Panc1 (cell line): ENCODE measurements at regions of chr5 and their contacts with region 1.

Region 1: GRCh38 chr5:172770675-172771438 is at the start of gene DUSP1:
- DNase-seq: peak; percentile 76
- ATAC-seq: peak; percentile 72
- H3K4me3 ChIP-seq: peak within 1 kb of the TSS; percentile 78 to 97
- H3K27ac ChIP-seq: peak within 1 kb of the TSS; percentile 99
- H3K4me1 ChIP-seq: peaks cover 69% of the 10 kb centered on the region
- H3K27me3 ChIP-seq: no peaks in the 10 kb centered on the region
- CTCF ChIP-seq: peak; percentile 80
- total RNA-seq, gene DUSP1: 79.9 TPM

Region 2: GRCh38 chr5:171524466-171524865 is 1246.4 kb before region 1 on chr5:
- CTCF ChIA-PET with region 1: no interaction called
- POLR2A ChIA-PET with region 1: no interaction called
- in situ Hi-C with region 1: no loop called
- intact Hi-C with region 1: no loop called
- DNase-seq: no peak
- ATAC-seq: no peak
- H3K4me3 ChIP-seq: no peak overlapping the region
- H3K27ac ChIP-seq: no peak overlapping the region
- H3K4me1 ChIP-seq: no peaks in the 10 kb centered on the region; the same call in 1 of the 2 replicates
- H3K27me3 ChIP-seq: no peaks in the 10 kb centered on the region
- CTCF ChIP-seq: no peak

Region 3: GRCh38 chr5:172559004-172559932 is 211.6 kb before region 1 on chr5:
- CTCF ChIA-PET with region 1: no interaction called
- POLR2A ChIA-PET with region 1: no interaction called
- in situ Hi-C with region 1: no loop called
- intact Hi-C with region 1: no loop called
- DNase-seq: no peak
- ATAC-seq: peak; percentile 55; the same call in 1 of the 2 replicates
- H3K4me3 ChIP-seq: no peak overlapping the region
- H3K27ac ChIP-seq: no peak overlapping the region
- H3K4me1 ChIP-seq: no peaks in the 10 kb centered on the region
- H3K27me3 ChIP-seq: no peaks in the 10 kb centered on the region
- CTCF ChIP-seq: no peak

Region 4: GRCh38 chr5:172902497-172903200 is 131.8 kb after region 1 on chr5:
- CTCF ChIA-PET with region 1: no interaction called
- POLR2A ChIA-PET with region 1: no interaction called
- in situ Hi-C with region 1: no loop called
- intact Hi-C with region 1: loop called (anchors 10 kb)
- DNase-seq: no peak
- ATAC-seq: peak; percentile 62
- H3K4me3 ChIP-seq: no peak overlapping the region
- H3K27ac ChIP-seq: peak overlapping the region; percentile 85
- H3K4me1 ChIP-seq: peaks cover 76% of the 10 kb centered on the region
- H3K27me3 ChIP-seq: no peaks in the 10 kb centered on the region
- CTCF ChIP-seq: peak; percentile 86; the same call in 1 of the 2 replicates

Region 5: GRCh38 chr5:172932313-172933017 is 161.6 kb after region 1 on chr5:
- CTCF ChIA-PET with region 1: no interaction called
- POLR2A ChIA-PET with region 1: interaction called, 3 read pairs
- in situ Hi-C with region 1: no loop called
- intact Hi-C with region 1: loop called (anchors 5 kb)
- DNase-seq: no peak
- ATAC-seq: peak; percentile 82
- H3K4me3 ChIP-seq: no peak overlapping the region
- H3K27ac ChIP-seq: peak overlapping the region; percentile 36; the same call in 1 of the 2 replicates
- H3K4me1 ChIP-seq: peaks cover 19% of the 10 kb centered on the region
- H3K27me3 ChIP-seq: no peaks in the 10 kb centered on the region
- CTCF ChIP-seq: peak; percentile 98

Region 6: DNA sequence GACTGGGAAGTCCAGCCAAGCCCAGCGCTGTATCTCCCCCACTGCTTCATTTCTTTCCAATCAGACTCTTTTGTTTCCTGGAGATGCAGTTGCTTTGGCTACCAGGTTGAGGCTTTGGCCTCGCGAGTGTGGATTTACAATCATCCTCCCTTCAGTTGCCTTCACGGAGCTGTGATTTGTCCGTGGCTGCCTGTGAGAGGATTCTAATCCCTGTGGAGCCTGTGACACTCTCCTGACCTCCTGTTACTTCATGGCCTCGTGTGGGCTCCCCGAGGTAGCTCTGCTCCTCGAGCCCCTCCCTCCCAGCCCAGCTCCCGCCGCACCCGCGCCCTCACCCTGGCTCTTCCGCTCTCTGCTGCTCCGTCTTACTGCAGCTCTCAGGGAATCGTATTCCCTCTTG is 664.6 kb after region 1 on chr5:
- CTCF ChIA-PET with region 1: no interaction called
- POLR2A ChIA-PET with region 1: no interaction called
- in situ Hi-C with region 1: no loop called
- intact Hi-C with region 1: no loop called
- DNase-seq: no peak
- ATAC-seq: no peak
- H3K4me3 ChIP-seq: no peak overlapping the region
- H3K27ac ChIP-seq: no peak overlapping the region
- H3K4me1 ChIP-seq: no peaks in the 10 kb centered on the region
- H3K27me3 ChIP-seq: no peaks in the 10 kb centered on the region
- CTCF ChIP-seq: no peak